Pancreas (tissue), 10 donors: ENCODE measurements at regions of chr12 and their contacts with region 1.

Region 1: DNA sequence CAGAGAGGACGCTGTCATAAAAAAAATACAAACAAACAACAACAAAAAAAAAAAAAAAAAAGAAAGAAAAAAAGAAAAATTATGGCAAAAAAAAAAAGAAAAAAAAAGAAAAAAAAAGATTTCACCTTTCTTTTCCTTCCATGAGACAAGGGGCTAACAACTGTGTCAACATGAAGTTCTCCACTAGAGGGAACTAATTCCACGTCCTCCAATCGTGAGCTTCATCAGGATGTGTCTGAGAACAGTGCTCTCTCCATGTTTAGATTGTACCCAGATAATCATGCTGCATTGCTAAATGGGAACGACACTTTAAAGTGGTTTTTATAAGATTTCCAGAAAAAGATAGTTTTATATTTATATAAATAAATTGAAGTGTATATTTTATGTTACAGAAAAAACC is 96.2 kb upstream of the PTPRB start:
- DNase-seq: peak in 1 of 6 donors; percentile 27
- ATAC-seq: peak; percentile 67 to 93 (median 90)
- H3K4me3 ChIP-seq: no peak overlapping the region
- H3K27ac ChIP-seq: no peak overlapping the region
- H3K4me1 ChIP-seq: no peaks in the 10 kb centered on the region
- H3K27me3 ChIP-seq: no peaks in the 10 kb centered on the region
- CTCF ChIP-seq: peak; percentile 29 to 66 (median 42)

Region 2: DNA sequence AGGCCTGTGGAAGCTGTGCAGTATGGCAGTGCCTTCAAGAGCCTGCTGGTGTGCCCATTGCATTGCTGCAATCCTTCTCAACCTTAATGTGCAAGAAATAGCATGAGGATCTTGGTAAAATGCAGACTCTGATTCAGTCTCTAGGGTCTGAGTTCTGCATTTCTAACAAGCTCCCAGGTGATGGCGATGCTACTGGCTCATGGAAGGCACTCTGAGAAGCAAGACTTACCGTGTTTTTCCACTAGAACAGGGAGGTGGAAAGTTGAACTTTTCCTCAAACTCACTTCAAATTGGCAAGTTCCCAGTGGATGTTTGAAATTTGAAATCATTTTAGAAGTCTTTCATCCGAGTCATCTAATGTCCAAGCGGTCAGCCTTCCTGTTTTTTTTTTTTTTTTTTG is 852.8 kb before region 1 on chr12:
- intact Hi-C with region 1: loop called in 1 of 3 experiments (anchors 5 kb)
- DNase-seq: no peak
- ATAC-seq: no peak
- H3K4me3 ChIP-seq: no peak overlapping the region
- H3K27ac ChIP-seq: no peak overlapping the region
- H3K4me1 ChIP-seq: no peaks in the 10 kb centered on the region
- H3K27me3 ChIP-seq: peaks cover 0 to 12% (median 0%) of the 10 kb centered on the region in 4 donors
- CTCF ChIP-seq: no peak

Region 3: GRCh38 chr12:70849265-70849960 is 116.0 kb after region 1 on chr12:
- intact Hi-C with region 1: loop called in 1 of 3 experiments (anchors 10 kb)
- DNase-seq: no peak
- ATAC-seq: no peak
- H3K4me3 ChIP-seq: no peak overlapping the region
- H3K27ac ChIP-seq: no peak overlapping the region
- H3K4me1 ChIP-seq: no peaks in the 10 kb centered on the region
- H3K27me3 ChIP-seq: no peaks in the 10 kb centered on the region
- CTCF ChIP-seq: peak in 2 of 4 donors; percentile 12 to 23

Region 4: DNA sequence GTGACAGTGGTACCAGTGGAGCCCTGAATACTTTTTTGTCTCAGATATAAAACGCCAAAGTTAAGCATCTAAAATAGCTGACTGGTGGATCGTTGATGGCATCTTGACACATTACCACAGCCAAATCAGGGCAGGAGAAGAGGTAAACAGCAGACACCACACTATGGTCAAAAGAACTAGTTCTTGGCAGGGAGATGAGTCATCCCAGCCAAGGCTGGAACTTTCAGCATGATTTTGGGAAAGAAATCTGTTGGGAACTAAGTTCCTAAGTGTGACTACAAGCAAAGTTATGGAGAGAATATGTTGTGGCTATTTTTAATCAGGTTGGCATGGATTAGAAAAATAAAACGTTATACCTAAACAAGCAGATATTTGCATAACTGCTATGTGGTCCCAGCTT is 743.1 kb after region 1 on chr12:
- intact Hi-C with region 1: no loop called
- DNase-seq: no peak
- ATAC-seq: peak in 1 of 4 donors; percentile 18
- H3K4me3 ChIP-seq: no peak overlapping the region
- H3K27ac ChIP-seq: no peak overlapping the region
- H3K4me1 ChIP-seq: no peaks in the 10 kb centered on the region
- H3K27me3 ChIP-seq: no peaks in the 10 kb centered on the region
- CTCF ChIP-seq: no peak